Transverse colon (tissue), 4 donors: ENCODE measurements at regions of chr2 and their contacts with region 1.

Region 1: GRCh38 chr2:106104332-106105062 is 89.6 kb downstream of the UXS1 start:
- DNase-seq: peak; percentile 59
- H3K4me3 ChIP-seq: no peak overlapping the region
- H3K27ac ChIP-seq: no peak overlapping the region
- H3K4me1 ChIP-seq: no peaks in the 10 kb centered on the region
- H3K27me3 ChIP-seq: no peaks in the 10 kb centered on the region
- CTCF ChIP-seq: peak; percentile 91 to 98 (median 94)
- EP300 ChIP-seq: no peak
- POLR2A ChIP-seq: no peak

Region 2: GRCh38 chr2:105526000-105526925 is 578.2 kb before region 1 on chr2:
- in situ Hi-C with region 1: no loop called
- intact Hi-C with region 1: no loop called
- DNase-seq: no peak
- H3K4me3 ChIP-seq: no peak overlapping the region
- H3K27ac ChIP-seq: no peak overlapping the region
- H3K4me1 ChIP-seq: no peaks in the 10 kb centered on the region
- H3K27me3 ChIP-seq: no peaks in the 10 kb centered on the region
- CTCF ChIP-seq: no peak
- EP300 ChIP-seq: no peak
- POLR2A ChIP-seq: no peak

Region 3: DNA sequence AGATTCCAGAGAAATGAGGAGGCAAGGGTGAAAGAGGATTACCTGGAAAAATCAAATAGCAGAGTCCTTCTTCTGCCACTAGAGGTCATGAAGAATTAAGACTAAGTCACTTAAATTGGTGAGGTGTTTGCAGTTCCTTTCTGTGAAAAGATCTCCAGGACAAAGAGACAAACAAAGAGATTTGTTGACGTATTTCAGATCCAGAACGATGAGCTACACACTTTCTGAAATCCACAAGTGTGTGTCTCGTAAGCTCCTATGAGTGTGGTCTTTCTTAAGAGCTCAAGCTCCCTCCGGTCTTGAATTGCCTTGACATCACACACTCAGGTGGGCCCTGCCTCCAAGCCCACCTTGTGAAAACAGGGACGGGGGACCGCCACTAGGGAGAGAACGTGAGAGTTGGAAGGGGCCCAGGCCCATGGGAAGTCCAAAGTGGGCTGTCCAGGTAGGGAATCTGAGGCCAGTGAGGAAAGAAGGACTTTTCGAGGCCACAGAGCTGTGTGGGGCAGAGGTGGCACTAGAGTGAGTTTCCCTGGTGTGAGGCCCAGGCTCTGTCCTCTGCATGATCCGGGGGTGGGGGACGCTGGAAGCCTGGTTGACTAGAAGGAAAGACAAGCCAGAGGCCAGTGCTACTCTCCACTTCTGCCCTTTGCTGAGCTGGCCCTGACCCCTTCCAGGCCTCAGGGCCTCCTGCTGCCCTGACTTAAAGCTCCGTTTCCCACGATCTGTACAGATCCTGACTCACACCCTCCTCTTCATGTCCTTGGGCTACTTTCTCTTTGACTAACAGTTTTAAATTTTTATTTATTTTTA is 527.9 kb before region 1 on chr2:
- in situ Hi-C with region 1: loop called in 1 of 4 experiments (anchors 25 kb)
- intact Hi-C with region 1: loop called (anchors 10 kb)
- DNase-seq: no peak
- H3K4me3 ChIP-seq: no peak overlapping the region
- H3K27ac ChIP-seq: peak overlapping the region in 3 of 4 donors; percentile 48 to 58 (median 56)
- H3K4me1 ChIP-seq: peaks cover 0 to 53% (median 13%) of the 10 kb centered on the region in 4 donors
- H3K27me3 ChIP-seq: no peaks in the 10 kb centered on the region
- CTCF ChIP-seq: peak; percentile 60 to 79 (median 68)
- EP300 ChIP-seq: no peak
- POLR2A ChIP-seq: no peak

Region 4: GRCh38 chr2:106537047-106537446 is 432.6 kb after region 1 on chr2:
- in situ Hi-C with region 1: loop called in 3 of 4 experiments (anchors 10 to 25 kb)
- intact Hi-C with region 1: loop called (anchors 10 kb)
- DNase-seq: no peak
- H3K4me3 ChIP-seq: no peak overlapping the region
- H3K27ac ChIP-seq: no peak overlapping the region
- H3K4me1 ChIP-seq: no peaks in the 10 kb centered on the region
- H3K27me3 ChIP-seq: peaks cover 1% of the 10 kb centered on the region
- CTCF ChIP-seq: no peak
- EP300 ChIP-seq: no peak
- POLR2A ChIP-seq: no peak

Region 5: GRCh38 chr2:106542811-106543259 is 438.3 kb after region 1 on chr2:
- in situ Hi-C with region 1: loop called in 3 of 4 experiments (anchors 10 to 25 kb)
- intact Hi-C with region 1: loop called (anchors 10 kb)
- DNase-seq: peak; percentile 77
- H3K4me3 ChIP-seq: peak overlapping the region in 3 of 4 donors; percentile 20 to 45 (median 23)
- H3K27ac ChIP-seq: peak overlapping the region in 2 of 4 donors; percentile 39 to 54
- H3K4me1 ChIP-seq: peaks cover 7 to 19% (median 14%) of the 10 kb centered on the region in 4 donors
- H3K27me3 ChIP-seq: peaks cover 8% of the 10 kb centered on the region
- CTCF ChIP-seq: peak; percentile 82 to 95 (median 91)
- EP300 ChIP-seq: no peak
- POLR2A ChIP-seq: no peak

Region 6: DNA sequence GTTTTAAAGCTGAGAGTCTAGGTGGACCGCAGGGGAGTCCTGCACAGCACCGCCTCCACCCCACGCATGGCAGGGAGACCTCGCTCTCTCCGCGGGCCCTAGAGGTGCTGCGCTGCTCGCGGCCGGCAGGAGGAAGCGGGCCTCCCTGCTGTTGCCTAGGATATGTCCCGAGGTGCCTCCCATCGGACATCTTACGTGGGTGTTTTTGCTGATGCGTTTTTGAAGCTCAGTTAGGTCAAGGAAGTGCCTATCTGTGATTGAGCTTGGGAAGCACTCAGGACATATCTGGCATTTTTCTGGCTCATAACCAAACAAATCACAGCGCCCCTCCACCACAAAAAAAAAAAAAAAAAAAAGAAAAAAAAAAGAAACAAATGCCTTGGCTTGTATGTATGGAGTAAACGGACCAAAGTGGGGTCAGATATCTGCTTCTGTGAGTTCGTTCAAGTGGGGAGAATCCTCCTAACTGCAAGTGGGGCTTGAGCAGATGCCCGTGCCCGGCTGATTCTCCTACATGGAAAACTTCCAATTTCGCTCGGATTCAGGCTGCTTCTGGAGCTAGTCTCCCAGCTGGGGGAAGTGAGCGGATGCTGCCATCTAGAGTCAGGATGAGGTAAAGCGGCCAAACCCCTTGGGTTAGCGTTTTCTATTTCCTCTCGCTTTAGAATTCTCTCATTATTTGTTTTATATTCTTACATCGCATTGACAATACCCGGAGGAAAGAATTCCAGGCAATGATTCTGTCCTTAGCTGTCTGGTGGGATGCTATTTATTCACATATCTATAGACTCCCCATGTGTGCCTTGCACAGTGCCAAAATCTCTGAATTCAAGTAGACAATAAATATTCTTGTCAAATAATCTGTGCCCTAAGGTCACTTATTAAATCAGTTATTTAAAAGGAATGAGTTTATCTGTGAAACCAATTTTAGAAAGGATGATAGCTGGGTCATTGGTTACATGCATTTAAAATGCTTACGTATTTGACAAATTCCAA is 477.9 kb after region 1 on chr2:
- in situ Hi-C with region 1: loop called in 1 of 4 experiments (anchors 25 kb)
- intact Hi-C with region 1: no loop called
- DNase-seq: peak; percentile 76
- H3K4me3 ChIP-seq: peak overlapping the region in 2 of 4 donors; percentile 17 to 42
- H3K27ac ChIP-seq: no peak overlapping the region
- H3K4me1 ChIP-seq: peaks cover 2 to 8% (median 5%) of the 10 kb centered on the region in 4 donors
- H3K27me3 ChIP-seq: peaks cover 39% of the 10 kb centered on the region
- CTCF ChIP-seq: peak; percentile 63 to 80 (median 72)
- EP300 ChIP-seq: no peak
- POLR2A ChIP-seq: no peak